ENCODE measurements at regions of chr6 and their contacts with region 1.

Region 1: DNA sequence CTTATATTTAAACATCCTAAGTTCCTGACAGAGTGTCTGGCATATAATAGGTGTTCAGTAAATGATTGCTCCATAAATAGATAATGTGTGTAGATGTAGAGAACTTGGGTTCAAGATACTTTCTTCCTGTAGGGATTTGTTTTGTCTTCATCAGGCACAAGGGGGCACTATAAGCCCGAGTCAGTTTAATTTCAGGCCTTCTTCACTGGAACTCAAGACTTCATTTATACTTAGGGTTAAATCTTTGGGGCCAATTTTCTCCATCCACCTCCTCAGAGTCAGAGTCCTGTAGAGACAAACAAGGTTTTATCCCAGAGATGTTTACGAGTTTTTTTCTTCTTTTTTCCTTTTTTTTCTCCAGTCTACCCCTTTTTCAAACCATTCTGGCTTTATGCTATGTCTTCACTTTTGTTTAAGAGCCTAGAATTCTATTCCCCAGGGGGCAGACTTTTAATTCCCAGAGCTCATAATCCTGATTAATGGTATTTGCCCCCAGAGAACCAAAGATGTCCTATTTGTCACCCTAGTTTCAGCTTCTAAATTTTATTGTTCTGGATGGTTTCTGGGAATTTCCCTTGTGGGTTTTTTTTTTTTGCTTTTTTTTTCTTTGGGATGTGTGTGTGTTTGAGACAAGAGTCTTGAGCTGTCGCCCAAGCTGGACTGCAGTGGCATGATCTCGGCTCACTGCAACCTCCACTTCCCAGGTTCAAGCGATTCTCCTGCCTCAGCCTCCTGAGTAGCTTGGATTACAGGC is 88.4 kb downstream of the HFE start:
- DNase-seq: peak; percentile 50 to 73 (median 70)
- H3K4me3 ChIP-seq: no peak overlapping the region
- H3K4me3 Mint-ChIP-seq: peak overlapping the region in 4 of 8 donors; percentile 37 to 70 (median 65)
- H3K27ac ChIP-seq: no peak overlapping the region
- H3K27ac Mint-ChIP-seq: peak overlapping the region; percentile 28 to 89 (median 78)
- H3K4me1 ChIP-seq: peaks cover 37% of the 10 kb centered on the region
- H3K4me1 Mint-ChIP-seq: peaks cover 21 to 40% (median 27%) of the 10 kb centered on the region in 4 donors
- H3K27me3 ChIP-seq: no peaks in the 10 kb centered on the region
- H3K27me3 Mint-ChIP-seq: no peaks in the 10 kb centered on the region

Region 2: GRCh38 chr6:26204332-26205165 is 28.9 kb after region 1 on chr6:
- CTCF ChIA-PET with region 1: interaction called, 49 read pairs
- POLR2A ChIA-PET with region 1: interaction called, 2,476 read pairs
- intact Hi-C with region 1: loop called (anchors 1 kb)
- DNase-seq: peak; percentile 85 to 95 (median 89)
- H3K4me3 ChIP-seq: peak overlapping the region; percentile 48 to 87
- H3K4me3 Mint-ChIP-seq: no peak overlapping the region
- H3K27ac ChIP-seq: peak overlapping the region; percentile 82
- H3K27ac Mint-ChIP-seq: no peak overlapping the region
- H3K4me1 ChIP-seq: peaks cover 39% of the 10 kb centered on the region
- H3K4me1 Mint-ChIP-seq: peaks cover 8 to 26% (median 13%) of the 10 kb centered on the region in 4 donors
- H3K27me3 ChIP-seq: no peaks in the 10 kb centered on the region
- H3K27me3 Mint-ChIP-seq: peaks cover 0 to 3% of the 10 kb centered on the region in 2 donors

Region 3: GRCh38 chr6:26223650-26224546 is 48.3 kb after region 1 on chr6:
- CTCF ChIA-PET with region 1: interaction called, 3 read pairs
- POLR2A ChIA-PET with region 1: interaction called, 16 read pairs
- intact Hi-C with region 1: no loop called
- DNase-seq: peak; percentile 74 to 87 (median 84)
- H3K4me3 ChIP-seq: peak overlapping the region; percentile 45 to 82
- H3K4me3 Mint-ChIP-seq: no peak overlapping the region
- H3K27ac ChIP-seq: peak overlapping the region; percentile 69
- H3K27ac Mint-ChIP-seq: no peak overlapping the region
- H3K4me1 ChIP-seq: peaks cover 21% of the 10 kb centered on the region
- H3K4me1 Mint-ChIP-seq: peaks cover 6 to 8% (median 7%) of the 10 kb centered on the region in 4 donors
- H3K27me3 ChIP-seq: no peaks in the 10 kb centered on the region
- H3K27me3 Mint-ChIP-seq: no peaks in the 10 kb centered on the region

Region 4: GRCh38 chr6:26249957-26250697 is 74.5 kb after region 1 on chr6:
- CTCF ChIA-PET with region 1: interaction called, 13 read pairs
- POLR2A ChIA-PET with region 1: interaction called, 3 read pairs
- intact Hi-C with region 1: loop called (anchors 1 kb)
- DNase-seq: peak; percentile 79 to 88 (median 83)
- H3K4me3 ChIP-seq: peak overlapping the region; percentile 86 to 88
- H3K4me3 Mint-ChIP-seq: peak overlapping the region; percentile 92 to 99 (median 98)
- H3K27ac ChIP-seq: peak overlapping the region; percentile 59
- H3K27ac Mint-ChIP-seq: peak overlapping the region; percentile 85 to 97 (median 94)
- H3K4me1 ChIP-seq: peaks cover 25% of the 10 kb centered on the region
- H3K4me1 Mint-ChIP-seq: peaks cover 28 to 53% (median 40%) of the 10 kb centered on the region in 4 donors
- H3K27me3 ChIP-seq: no peaks in the 10 kb centered on the region
- H3K27me3 Mint-ChIP-seq: no peaks in the 10 kb centered on the region

Region 5: GRCh38 chr6:26596579-26597388 is 421.2 kb after region 1 on chr6 and contains the start of gene ABT1:
- CTCF ChIA-PET with region 1: interaction called, 14 read pairs
- POLR2A ChIA-PET with region 1: interaction called, 11 read pairs
- intact Hi-C with region 1: no loop called
- DNase-seq: peak; percentile 95 to 98 (median 96)
- H3K4me3 ChIP-seq: peak within 1 kb of the TSS; percentile 76 to 98
- H3K4me3 Mint-ChIP-seq: no peak within 1 kb of the TSS
- H3K27ac ChIP-seq: peak within 1 kb of the TSS; percentile 91
- H3K27ac Mint-ChIP-seq: peak within 1 kb of the TSS in 3 of 7 donors; percentile 80 to 92 (median 88)
- H3K4me1 ChIP-seq: peaks cover 24% of the 10 kb centered on the region
- H3K4me1 Mint-ChIP-seq: peaks cover 0 to 16% (median 8%) of the 10 kb centered on the region in 4 donors
- H3K27me3 ChIP-seq: no peaks in the 10 kb centered on the region
- H3K27me3 Mint-ChIP-seq: peaks cover 15 to 22% of the 10 kb centered on the region in 2 donors
- total RNA-seq, gene ABT1: 33.5 to 34.8 TPM